Activated T-helper 2 cell treated with anti-CD3 and anti-CD28 coated beads, Interferon-gamma antibody, Interleukin-2, Interleukin-4, amounts not matched to agents 10 μg/mL and 5 μg/mL and 100 μg/mL, durations not matched to agents 14 hours and 24 hours and 36 hours (primary cell): ENCODE measurements at regions of chr12 and their contacts with region 1.

Region 1: DNA sequence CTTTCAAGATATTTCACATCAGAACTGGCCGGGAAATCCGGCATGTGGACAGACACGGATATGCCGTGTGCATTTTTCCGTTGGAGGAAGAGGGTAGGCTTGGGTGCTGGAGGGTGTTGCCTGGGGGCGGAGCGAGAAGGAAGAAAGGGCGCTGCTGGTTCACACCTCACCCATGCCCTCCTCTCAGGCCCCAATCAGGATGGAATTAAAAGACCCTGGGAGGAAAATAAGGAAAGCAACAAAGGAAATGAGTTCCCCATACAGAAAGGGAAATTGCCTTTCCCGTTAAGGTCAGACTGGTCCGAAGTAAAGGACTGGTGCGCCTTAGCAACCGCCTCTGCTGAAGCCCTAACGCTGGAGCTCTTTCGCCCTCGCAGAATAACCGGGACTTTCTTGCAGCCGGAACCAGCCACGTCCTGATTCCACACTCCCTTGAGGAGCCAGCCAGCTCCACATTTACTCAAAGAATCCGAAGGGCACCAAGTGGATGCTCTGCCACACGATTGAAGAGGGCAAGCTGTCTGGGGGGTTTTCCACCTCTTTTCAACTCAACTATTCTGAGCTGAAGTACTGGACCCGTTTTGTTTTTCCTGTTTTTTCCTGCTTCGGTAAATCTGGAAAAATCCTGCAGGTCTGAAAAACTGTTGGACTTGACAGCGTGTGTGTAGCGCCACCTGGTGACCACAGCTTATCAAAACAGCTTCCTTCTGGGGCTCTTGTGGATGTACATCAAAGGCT is 37.7 kb upstream of the BCL2L14 start:
- DNase-seq: peak; percentile 49
- H3K4me3 Mint-ChIP-seq: peak overlapping the region; percentile 65
- H3K27ac Mint-ChIP-seq: peak overlapping the region; percentile 79
- H3K4me1 Mint-ChIP-seq: peaks cover 31% of the 10 kb centered on the region
- H3K27me3 Mint-ChIP-seq: peaks cover 8% of the 10 kb centered on the region

Region 2: DNA sequence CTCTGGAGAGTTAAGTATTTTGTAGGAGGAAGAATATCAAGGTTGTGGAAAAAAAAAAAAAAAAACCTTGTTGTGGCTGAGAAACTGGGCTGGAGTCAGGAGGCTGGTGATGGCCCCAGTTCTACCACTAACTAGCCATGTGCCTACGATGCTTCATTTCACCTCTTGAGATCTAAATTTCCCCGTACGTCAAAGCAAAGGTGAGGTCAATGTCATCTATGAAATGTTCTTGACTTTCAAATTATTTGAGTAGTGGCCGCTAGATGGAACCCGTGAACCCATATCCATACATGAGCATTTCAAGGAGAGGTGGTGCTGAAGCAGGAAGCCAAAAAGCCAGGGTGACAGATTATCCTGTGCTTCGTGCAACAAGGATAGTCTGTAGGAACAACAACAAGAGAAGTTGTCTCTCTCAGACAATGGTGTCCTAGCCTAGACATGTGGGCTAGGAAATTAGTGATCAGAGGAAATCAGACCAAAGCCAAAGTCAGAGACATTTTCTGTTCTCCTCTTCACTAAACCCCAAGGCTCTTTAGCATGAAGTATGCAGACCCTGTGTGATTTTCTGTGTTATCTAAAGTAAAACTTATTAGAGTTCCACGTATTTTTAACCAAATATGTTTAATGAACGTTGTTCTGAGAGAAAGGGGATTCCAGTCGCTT is 479.0 kb before region 1 on chr12:
- intact Hi-C with region 1: loop called (anchors 1 kb)
- DNase-seq: peak; percentile 34
- H3K4me3 Mint-ChIP-seq: no peak overlapping the region
- H3K27ac Mint-ChIP-seq: peak overlapping the region; percentile 31
- H3K4me1 Mint-ChIP-seq: peaks cover 22% of the 10 kb centered on the region
- H3K27me3 Mint-ChIP-seq: peaks cover 50% of the 10 kb centered on the region

Region 3: DNA sequence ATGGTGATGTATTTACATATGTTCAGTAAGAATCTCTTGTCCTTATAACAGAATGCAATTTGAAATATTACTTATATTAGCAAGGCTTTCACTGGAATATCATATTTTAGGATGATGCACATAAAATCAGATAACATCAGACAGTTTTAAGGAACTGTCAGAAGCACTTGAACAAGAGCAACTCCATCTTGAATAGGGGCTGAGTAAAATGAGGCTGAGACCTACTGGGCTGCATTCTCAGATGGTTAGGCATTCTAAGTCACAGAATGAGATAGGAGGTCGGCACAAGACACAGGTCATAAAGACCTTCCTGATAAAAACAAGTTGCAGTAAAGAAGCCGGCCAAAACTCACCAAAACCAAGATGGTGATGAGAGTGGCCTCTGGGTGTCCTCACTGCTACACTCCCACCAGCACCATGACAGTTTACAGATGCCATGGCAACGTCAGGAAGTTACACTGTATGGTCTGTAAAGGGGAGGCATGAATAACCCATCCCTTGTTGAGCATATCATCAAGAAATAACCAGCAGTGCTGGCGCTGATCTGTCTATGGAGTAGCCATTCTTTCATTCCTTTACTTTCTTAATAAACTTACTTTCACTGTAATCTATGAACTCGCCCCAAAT is 411.1 kb before region 1 on chr12:
- intact Hi-C with region 1: loop called (anchors 2 kb)
- DNase-seq: no peak
- H3K4me3 Mint-ChIP-seq: no peak overlapping the region
- H3K27ac Mint-ChIP-seq: no peak overlapping the region
- H3K4me1 Mint-ChIP-seq: peaks cover 4% of the 10 kb centered on the region
- H3K27me3 Mint-ChIP-seq: peaks cover 8% of the 10 kb centered on the region

Region 4: DNA sequence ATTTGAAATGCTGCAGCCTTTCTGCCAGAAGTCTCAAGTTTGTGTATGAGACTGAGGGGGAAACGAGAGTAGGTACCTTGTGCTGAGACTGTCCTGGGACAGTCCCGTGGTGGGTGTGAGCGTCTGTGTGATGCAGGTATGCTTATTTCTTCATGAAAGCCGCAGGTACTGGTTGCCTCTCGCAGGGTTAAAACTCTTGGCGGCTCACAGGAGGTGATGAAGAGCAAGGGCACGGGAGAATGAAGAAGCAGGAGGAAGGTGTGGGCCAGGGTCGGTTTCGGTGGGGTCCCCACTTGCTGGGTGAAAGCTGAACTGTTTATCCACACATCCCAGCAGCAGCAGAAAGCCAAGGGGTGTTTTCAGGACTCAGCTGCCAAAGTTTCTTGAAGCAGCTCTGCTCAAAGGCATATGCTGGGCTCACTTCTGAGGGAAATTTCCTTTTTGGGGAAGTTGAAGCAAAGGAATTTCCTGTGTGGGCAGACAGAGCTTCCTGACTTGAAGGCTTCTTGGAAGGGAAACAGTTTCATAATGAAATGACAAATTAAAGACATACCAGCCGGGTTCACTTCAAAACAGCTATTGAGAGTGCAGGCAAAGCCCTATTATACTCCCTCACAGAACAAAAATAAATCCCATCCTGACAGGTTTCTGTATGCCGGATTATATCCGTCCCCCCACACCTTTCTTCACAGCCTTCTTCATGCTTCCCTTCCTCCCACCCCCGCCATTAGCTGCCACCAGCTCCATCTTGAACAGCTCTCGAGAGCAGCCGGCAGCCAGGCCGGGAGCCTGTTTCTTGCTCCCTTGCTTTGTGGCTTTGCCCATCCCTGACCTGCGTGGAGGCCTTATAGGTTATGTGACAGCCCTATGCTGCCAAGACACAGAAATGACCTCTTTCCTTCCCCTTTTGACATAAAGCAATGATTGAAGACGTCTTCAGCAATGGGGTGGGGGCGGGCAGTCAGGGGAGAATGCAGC is 266.9 kb before region 1 on chr12:
- intact Hi-C with region 1: loop called (anchors 5 kb)
- DNase-seq: no peak
- H3K4me3 Mint-ChIP-seq: peak overlapping the region; percentile 63
- H3K27ac Mint-ChIP-seq: peak overlapping the region; percentile 87
- H3K4me1 Mint-ChIP-seq: peaks cover 77% of the 10 kb centered on the region
- H3K27me3 Mint-ChIP-seq: no peaks in the 10 kb centered on the region

Region 5: DNA sequence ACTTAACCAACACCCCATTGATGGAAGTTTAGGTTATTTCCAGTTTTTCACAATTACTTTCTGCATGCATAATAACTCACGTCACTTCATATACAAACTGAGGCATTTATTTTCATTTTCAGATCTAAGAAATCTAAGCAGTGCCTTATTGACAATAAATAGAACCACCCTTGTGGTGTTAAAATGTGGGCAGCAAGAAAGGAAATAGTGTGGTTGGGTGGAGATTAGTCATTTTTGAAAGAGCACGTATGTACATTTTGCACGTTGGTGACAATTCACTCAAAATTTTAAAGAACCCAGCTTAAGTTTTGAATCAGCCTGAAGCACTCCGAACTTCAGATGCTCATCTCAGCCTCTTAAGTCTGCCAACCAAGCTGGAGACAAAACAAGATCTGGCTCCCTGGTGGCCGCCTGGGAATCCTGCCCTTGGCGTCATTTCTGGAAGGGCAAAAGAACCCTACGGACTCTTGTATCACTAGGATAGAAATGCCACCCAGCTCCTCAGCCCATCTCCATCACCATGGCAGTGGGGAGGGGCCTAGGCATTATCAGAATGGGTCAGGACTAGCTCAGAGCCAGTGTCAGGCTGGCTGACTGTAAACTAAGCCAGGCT is 51.8 kb before region 1 on chr12:
- intact Hi-C with region 1: loop called (anchors 2 kb)
- DNase-seq: peak; percentile 60
- H3K4me3 Mint-ChIP-seq: peak overlapping the region; percentile 33
- H3K27ac Mint-ChIP-seq: peak overlapping the region; percentile 98
- H3K4me1 Mint-ChIP-seq: peaks cover 63% of the 10 kb centered on the region
- H3K27me3 Mint-ChIP-seq: no peaks in the 10 kb centered on the region